Activated B cell treated with CpG ODN at 0.5 μM for 24 hours (primary cell): ENCODE measurements at regions of chr3 and their contacts with region 1.

Region 1: DNA sequence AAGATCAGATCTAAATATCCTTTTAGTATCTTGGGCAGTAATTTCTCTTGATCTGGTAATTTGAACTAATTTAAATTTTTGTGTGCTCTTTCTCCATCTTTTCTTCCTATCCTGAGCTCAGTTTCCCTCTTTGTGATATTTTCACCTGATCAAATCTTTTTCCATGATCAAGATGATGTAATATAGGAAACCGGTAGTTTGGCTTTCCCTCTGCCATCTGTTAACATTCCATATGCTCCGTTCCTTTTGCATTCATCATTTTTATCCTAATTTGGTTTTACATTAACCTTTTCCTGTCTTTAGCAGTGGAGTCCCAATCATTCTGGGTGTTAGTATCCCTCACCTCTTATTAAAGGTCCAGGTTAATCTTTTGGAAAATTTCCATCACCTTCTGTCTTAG is 5.9 kb upstream of the ABHD6 start:
- DNase-seq: no peak
- ATAC-seq: no peak
- H3K4me3 Mint-ChIP-seq: no peak overlapping the region
- H3K27ac Mint-ChIP-seq: peak overlapping the region; percentile 90
- H3K4me1 Mint-ChIP-seq: peaks cover 63% of the 10 kb centered on the region
- H3K27me3 Mint-ChIP-seq: no peaks in the 10 kb centered on the region
- CTCF ChIP-seq: no peak

Region 2: DNA sequence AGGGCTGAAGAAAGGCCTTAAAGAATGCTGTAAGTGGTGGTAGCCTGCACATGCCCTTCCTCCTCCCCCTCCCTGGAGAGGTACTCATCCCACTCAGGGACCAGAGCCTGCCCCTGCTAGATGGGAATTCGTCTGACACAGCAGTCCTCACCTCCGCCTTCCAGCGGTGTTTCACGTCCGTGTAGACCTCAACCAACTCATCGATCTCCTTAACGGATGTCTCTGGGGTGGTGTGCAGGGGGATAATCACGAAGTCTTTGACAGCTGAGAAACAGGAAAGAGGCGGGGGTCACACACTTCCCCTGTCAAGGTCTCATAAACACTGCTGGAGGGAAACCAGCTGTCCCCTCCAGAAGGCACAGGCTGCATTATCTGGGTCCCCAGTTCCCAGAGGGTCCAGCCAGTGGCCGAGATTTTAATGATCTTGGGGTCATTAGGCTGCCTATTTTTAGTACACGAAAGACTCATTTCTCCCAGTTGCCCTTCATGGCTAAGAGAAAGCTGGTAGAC is 30.8 kb before region 1 on chr3:
- CTCF ChIA-PET with region 1: interaction called, 7 read pairs
- POLR2A ChIA-PET with region 1: interaction called, 58 read pairs
- intact Hi-C with region 1: loop called (anchors 1 kb)
- DNase-seq: no peak
- ATAC-seq: no peak
- H3K4me3 Mint-ChIP-seq: peak overlapping the region; percentile 64
- H3K27ac Mint-ChIP-seq: peak overlapping the region; percentile 70
- H3K4me1 Mint-ChIP-seq: peaks cover 66% of the 10 kb centered on the region
- H3K27me3 Mint-ChIP-seq: no peaks in the 10 kb centered on the region
- CTCF ChIP-seq: no peak

Region 3: DNA sequence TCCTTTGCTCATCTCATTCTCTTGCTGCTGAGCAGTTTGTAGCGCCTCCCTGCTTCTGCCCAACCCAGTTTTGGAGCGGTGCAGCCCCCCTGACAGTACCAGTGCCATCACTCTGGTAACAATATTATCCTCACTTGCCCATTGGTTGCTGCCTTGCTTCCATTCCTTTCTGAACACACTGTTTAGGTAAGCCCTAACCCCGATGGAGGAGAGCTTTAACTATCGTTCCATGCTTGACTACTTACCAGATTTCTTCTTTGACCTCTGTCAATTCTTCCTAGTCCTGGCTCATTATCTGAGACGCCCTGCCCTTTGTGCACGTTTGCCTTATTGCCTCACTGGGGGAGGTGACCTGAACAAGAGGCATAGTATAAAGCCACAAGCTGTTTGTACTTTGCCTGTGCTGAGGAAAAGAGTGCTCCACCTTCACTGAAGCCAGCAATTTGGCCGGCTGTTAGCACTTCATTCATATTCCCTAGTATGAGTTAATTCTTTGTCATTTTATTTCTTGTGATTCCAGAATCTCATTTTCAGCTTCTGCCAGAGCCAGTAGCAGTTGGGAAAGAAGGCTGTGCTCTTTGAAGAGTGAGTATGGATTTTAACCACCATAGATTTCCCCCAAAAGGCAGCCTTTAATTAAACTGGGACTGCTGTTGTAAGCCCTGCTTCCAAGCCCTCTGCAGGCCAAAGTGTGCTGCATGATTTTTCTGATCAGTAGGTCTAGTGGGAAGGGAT is 17.9 kb after region 1 on chr3:
- CTCF ChIA-PET with region 1: no interaction called
- POLR2A ChIA-PET with region 1: interaction called, 3 read pairs
- intact Hi-C with region 1: loop called (anchors 2 kb)
- DNase-seq: no peak
- ATAC-seq: peak; percentile 94
- H3K4me3 Mint-ChIP-seq: peak overlapping the region; percentile 49
- H3K27ac Mint-ChIP-seq: peak overlapping the region; percentile 50
- H3K4me1 Mint-ChIP-seq: peaks cover 34% of the 10 kb centered on the region
- H3K27me3 Mint-ChIP-seq: no peaks in the 10 kb centered on the region
- CTCF ChIP-seq: no peak